Activated CD4-positive, alpha-beta T cell treated with anti-CD3 and anti-CD28 coated beads, Interleukin-2, amount 10 ng/mL, durations not matched to agents 24 days and 14 days (primary cell): ENCODE measurements at regions of chr22 and their contacts with region 1.

Region 1: DNA sequence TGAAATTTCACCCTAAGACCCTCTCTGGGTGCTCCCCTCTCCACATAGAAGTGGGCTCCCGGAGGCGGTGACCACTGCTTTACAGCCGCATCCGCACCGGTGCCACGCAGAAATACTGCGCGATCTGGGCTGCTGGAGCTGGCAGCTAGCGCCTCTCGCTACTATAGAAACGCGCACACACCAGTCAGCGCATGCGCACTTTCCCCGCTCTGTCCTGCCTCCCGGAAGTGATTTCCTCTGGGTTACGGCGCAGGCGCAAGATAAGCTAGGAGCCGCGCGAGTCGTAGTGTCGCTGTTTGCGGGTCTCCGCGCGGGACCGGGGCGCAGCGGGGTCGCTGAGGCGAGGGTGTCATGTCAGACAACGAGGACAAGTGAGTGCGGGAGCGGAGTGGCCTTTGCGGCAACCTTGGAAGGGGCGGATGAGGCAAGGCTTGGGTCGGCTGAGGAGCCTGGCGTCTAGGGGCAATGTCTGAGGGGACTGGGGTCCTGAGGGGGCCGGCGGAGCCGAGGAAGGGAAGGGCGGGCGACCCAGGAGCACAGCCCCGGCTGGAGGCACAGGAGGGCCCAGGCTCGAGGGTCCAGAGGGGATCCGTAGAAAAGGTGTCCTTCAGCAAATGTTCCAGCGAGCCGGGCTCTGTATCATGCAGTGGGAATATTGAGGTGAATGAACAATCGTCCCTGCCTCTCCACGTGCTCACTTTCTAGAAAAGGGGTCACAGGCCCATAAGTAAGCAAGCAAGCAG is at the starts of genes C22orf23 and POLR2F:
- DNase-seq: peak; percentile 99
- H3K4me3 Mint-ChIP-seq: peak within 1 kb of the TSS; percentile 92
- H3K27ac Mint-ChIP-seq: peak within 1 kb of the TSS; percentile 93
- H3K4me1 Mint-ChIP-seq: peaks cover 26% of the 10 kb centered on the region
- H3K27me3 Mint-ChIP-seq: peaks cover 14% of the 10 kb centered on the region
- total RNA-seq, gene C22orf23: 0.37 TPM in 1 of 2 replicates, not detected in the other
- total RNA-seq, gene POLR2F: 113 TPM in 2 replicates

Region 2: GRCh38 chr22:37807410-37808293 is 146.0 kb before region 1 on chr22 and contains the start of gene GCAT:
- intact Hi-C with region 1: loop called (anchors 2 kb)
- DNase-seq: peak; percentile 97
- H3K4me3 Mint-ChIP-seq: peak within 1 kb of the TSS; percentile 94
- H3K27ac Mint-ChIP-seq: peak within 1 kb of the TSS; percentile 15
- H3K4me1 Mint-ChIP-seq: peaks cover 36% of the 10 kb centered on the region
- H3K27me3 Mint-ChIP-seq: peaks cover 23% of the 10 kb centered on the region
- total RNA-seq, gene GCAT: 27.7 and 28.9 TPM in 2 replicates

Region 3: GRCh38 chr22:37849089-37849751 is 104.4 kb before region 1 on chr22 and contains the start of gene EIF3L:
- intact Hi-C with region 1: loop called (anchors 2 kb)
- DNase-seq: peak; percentile 97
- H3K4me3 Mint-ChIP-seq: peak within 1 kb of the TSS; percentile 98
- H3K27ac Mint-ChIP-seq: peak within 1 kb of the TSS; percentile 97
- H3K4me1 Mint-ChIP-seq: peaks cover 41% of the 10 kb centered on the region
- H3K27me3 Mint-ChIP-seq: no peaks in the 10 kb centered on the region
- total RNA-seq, gene EIF3L: 460 and 480 TPM in 2 replicates

Region 4: GRCh38 chr22:37905534-37906363 is 47.9 kb before region 1 on chr22 and contains the start of gene MICALL1:
- intact Hi-C with region 1: loop called (anchors 5 kb)
- DNase-seq: peak; percentile 93
- H3K4me3 Mint-ChIP-seq: peak within 1 kb of the TSS; percentile 79
- H3K27ac Mint-ChIP-seq: peak within 1 kb of the TSS; percentile 81
- H3K4me1 Mint-ChIP-seq: peaks cover 26% of the 10 kb centered on the region
- H3K27me3 Mint-ChIP-seq: no peaks in the 10 kb centered on the region
- total RNA-seq, gene MICALL1: 27.3 and 27.7 TPM in 2 replicates

Region 5: DNA sequence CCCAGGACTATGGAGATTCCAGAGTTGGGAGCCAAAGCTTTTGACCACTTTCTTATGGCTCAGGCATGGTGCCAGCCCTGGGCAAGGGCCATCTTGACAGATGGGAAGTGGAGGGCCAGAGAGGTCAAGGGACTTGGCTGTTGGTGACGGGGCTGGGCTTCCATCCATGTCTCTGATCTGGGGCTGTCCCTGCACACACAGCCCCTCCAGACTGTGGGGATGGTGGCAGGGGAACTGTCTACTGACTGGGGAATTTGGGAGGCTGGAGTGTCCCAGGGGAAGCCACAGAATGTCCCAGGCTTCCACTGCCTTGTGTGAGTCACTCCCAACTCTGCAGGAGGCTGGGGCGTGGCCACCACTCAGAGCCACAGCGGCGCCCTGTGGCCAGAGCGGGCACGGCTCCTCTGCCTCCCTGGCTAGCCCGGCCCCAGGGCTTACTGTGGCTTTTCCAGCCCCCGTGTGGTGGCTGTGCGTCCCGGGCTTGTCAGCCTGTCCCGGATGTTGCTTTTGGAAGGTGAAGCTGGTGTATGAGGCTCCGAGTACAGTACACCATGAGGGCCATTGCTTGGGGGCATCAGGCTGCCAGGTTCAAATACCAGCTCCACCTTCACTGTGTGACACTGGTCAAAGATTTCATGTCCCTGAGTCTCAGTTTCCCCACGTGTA is 19.8 kb before region 1 on chr22:
- intact Hi-C with region 1: loop called (anchors 1 kb)
- DNase-seq: peak; percentile 96
- H3K4me3 Mint-ChIP-seq: no peak overlapping the region
- H3K27ac Mint-ChIP-seq: peak overlapping the region; percentile 51
- H3K4me1 Mint-ChIP-seq: peaks cover 9% of the 10 kb centered on the region
- H3K27me3 Mint-ChIP-seq: no peaks in the 10 kb centered on the region

Region 6: GRCh38 chr22:37965940-37966664 is 12.5 kb after region 1 on chr22:
- intact Hi-C with region 1: loop called (anchors 1 kb)
- DNase-seq: no peak
- H3K4me3 Mint-ChIP-seq: no peak overlapping the region
- H3K27ac Mint-ChIP-seq: no peak overlapping the region
- H3K4me1 Mint-ChIP-seq: peaks cover 4% of the 10 kb centered on the region
- H3K27me3 Mint-ChIP-seq: no peaks in the 10 kb centered on the region

Region 7: GRCh38 chr22:38026130-38027111 is 72.8 kb after region 1 on chr22:
- intact Hi-C with region 1: no loop called
- DNase-seq: no peak
- H3K4me3 Mint-ChIP-seq: no peak overlapping the region
- H3K27ac Mint-ChIP-seq: no peak overlapping the region
- H3K4me1 Mint-ChIP-seq: no peaks in the 10 kb centered on the region
- H3K27me3 Mint-ChIP-seq: no peaks in the 10 kb centered on the region